Naive thymus-derived CD8-positive, alpha-beta T cell (primary cell): ENCODE measurements at regions of chr11 and their contacts with region 1.

Region 1: DNA sequence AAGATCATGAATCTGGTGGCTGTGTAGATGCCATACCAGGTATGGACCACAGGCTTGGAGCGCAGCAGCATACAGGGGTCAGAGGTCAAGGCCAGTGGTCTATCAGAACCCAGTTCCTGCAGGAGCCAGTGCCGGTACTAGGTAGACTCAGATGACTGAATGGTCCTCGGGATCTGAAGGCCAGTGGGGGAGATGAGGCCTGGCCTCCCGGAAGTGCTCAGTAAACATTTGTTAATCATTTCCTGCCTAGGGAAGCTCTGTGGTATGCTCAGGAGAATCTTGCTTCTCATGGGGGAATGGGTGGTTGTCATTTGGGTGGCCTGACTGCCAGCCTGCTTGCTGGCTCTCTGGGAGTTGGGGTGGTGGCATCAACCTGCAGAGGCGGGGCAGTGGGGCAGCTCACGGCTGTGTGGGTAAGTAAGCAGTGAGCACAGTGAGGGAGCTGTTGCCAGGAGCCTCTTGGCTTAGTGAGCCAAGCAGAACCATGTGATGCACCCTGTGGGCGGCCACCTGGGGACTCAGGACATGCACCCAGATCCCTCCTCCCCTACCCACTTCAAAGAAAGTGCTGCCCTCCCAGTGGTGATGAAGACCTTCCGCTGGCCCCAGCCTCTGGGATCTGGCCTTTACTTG is 33.0 kb downstream of the PTPRJ start:
- DNase-seq: peak in 4 of 10 donors; percentile 6 to 65 (median 36)
- ATAC-seq: peak; percentile 31 to 56
- H3K4me3 Mint-ChIP-seq: peak overlapping the region; percentile 34 to 82 (median 62)
- H3K27ac Mint-ChIP-seq: peak overlapping the region; percentile 80 to 96 (median 92)
- H3K4me1 Mint-ChIP-seq: peaks cover 38 to 88% (median 69%) of the 10 kb centered on the region in 4 donors
- H3K27me3 Mint-ChIP-seq: no peaks in the 10 kb centered on the region

Region 2: GRCh38 chr11:47946682-47947575 is 66.5 kb before region 1 on chr11:
- POLR2A ChIA-PET with region 1: no interaction called
- DNase-seq: peak in 1 of 10 donors; percentile 9
- ATAC-seq: no peak
- H3K4me3 Mint-ChIP-seq: no peak overlapping the region
- H3K27ac Mint-ChIP-seq: peak overlapping the region in 6 of 10 donors; percentile 49 to 73 (median 57)
- H3K4me1 Mint-ChIP-seq: peaks cover 9 to 59% (median 39%) of the 10 kb centered on the region in 4 donors
- H3K27me3 Mint-ChIP-seq: no peaks in the 10 kb centered on the region

Region 3: GRCh38 chr11:47967577-47968425 is 45.6 kb before region 1 on chr11:
- POLR2A ChIA-PET with region 1: no interaction called
- DNase-seq: no peak
- ATAC-seq: no peak
- H3K4me3 Mint-ChIP-seq: no peak overlapping the region
- H3K27ac Mint-ChIP-seq: no peak overlapping the region
- H3K4me1 Mint-ChIP-seq: no peaks in the 10 kb centered on the region
- H3K27me3 Mint-ChIP-seq: no peaks in the 10 kb centered on the region

Region 4: DNA sequence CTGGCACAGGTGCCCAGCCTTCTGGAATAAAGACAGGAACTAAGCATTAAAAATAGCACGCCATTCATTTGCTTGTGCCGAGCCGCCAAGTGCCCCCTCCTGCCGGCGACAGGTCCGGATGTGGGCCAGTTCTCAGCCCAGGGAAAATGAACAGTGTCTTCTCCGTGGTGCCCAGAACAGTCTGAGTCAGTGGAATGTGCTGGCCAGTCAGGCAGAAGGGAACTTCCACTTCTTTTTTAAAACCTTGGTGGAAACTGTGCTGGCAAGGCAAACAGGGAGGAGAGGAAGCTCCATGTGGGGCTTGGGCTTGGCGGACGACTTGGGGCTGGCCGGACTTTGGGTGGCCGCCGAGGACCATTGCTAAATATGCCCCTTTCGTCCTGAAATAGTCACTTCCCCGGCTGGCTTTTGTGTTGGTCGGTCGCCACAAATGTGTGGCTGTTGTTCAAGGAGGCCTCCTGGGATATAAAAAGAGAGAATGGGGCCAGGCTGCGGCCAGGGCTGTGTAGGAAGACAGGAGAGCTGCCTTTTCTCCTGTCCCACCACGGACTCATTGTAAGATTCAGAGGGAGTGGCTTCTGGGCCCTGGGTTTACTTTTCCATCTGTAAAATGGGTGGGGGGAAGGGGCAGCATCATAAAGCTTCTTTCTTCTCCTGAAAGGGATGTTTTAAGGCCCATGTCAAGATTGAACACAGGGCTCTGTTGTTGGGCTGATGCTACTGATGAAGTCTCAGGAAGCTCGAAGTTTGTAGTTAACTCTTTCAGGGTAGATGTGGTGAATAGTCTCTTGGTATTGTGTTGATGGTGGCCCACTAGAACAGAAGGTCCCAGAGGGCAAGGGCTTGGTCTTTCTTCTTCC is 68.0 kb after region 1 on chr11:
- POLR2A ChIA-PET with region 1: interaction called, 11 read pairs
- DNase-seq: peak in 3 of 10 donors; percentile 8 to 26 (median 17)
- ATAC-seq: peak; percentile 68 to 83
- H3K4me3 Mint-ChIP-seq: peak overlapping the region in 5 of 10 donors; percentile 33 to 62 (median 53)
- H3K27ac Mint-ChIP-seq: peak overlapping the region in 5 of 10 donors; percentile 32 to 86 (median 65)
- H3K4me1 Mint-ChIP-seq: peaks cover 26 to 66% (median 35%) of the 10 kb centered on the region in 4 donors
- H3K27me3 Mint-ChIP-seq: no peaks in the 10 kb centered on the region